ENCODE measurements at regions of chr10 and their contacts with region 1.

Region 1: GRCh38 chr10:59580026-59580863 is 129.4 kb downstream of the SLC16A9 start:
- DNase-seq: no peak

Region 2: DNA sequence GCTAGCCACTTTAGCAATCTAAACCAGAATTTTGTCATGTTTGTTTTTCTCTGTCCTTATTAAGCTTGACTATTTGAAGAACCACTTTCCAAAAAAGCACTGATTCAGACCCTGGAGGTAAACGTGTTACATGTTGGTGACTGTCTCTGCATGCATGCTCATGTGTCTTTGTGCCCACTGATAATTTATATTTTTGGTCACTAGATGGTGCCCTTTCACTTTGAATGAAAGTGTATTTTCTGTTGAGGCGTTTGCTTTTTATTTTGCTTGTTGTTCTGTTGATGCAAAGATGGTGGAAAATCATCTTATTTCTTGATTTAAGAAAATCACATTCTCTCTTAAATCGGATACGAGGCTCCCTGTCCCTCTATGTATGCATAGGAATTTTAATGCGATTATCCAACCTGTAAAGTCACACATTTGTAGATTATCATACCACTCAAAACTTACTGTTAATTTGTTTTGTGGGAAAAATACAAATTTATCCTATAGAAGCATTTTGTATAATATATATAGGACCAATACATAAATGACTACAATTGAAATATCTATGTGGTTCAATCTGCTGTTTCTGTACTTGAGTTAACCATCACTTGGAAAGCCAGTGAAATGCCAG is 798.3 kb before region 1 on chr10:
- intact Hi-C with region 1: loop called (anchors 10 kb)
- DNase-seq: no peak

Region 3: DNA sequence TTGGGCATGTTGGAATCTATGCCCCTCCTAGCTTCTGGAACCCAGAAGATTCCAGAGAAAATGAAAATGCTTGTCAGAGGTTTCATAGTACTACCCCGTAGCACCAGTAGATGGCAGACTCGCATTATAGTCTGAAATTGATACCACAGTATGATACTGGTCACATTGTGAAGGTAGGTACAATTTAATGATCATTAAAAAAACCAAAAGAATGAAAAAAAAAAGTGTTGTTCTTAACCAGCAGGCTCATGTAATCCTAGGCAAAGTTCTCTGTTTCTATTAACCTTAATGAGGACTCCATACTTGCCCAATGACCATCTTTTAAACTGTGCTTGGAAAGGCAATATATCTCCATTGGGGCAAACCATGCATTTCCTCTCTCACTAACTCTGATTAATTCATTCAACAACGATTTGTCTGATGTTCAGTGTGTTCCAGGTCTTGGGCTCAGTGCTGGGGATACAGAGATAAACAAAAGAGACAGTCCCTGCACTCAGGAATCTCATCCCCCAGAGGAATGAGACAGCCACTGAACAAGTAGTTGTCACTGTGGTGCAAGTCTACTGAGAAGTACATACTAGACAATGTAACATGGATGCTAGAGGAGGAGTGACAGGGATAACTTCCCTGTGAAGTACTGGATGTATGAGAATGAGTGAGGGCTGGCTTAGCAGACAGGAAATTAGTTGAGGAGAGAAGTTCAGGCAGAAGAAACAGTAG is 627.3 kb before region 1 on chr10:
- intact Hi-C with region 1: loop called (anchors 5 kb)
- DNase-seq: peak in 3 of 10 donors; percentile 45 to 61 (median 46)

Region 4: DNA sequence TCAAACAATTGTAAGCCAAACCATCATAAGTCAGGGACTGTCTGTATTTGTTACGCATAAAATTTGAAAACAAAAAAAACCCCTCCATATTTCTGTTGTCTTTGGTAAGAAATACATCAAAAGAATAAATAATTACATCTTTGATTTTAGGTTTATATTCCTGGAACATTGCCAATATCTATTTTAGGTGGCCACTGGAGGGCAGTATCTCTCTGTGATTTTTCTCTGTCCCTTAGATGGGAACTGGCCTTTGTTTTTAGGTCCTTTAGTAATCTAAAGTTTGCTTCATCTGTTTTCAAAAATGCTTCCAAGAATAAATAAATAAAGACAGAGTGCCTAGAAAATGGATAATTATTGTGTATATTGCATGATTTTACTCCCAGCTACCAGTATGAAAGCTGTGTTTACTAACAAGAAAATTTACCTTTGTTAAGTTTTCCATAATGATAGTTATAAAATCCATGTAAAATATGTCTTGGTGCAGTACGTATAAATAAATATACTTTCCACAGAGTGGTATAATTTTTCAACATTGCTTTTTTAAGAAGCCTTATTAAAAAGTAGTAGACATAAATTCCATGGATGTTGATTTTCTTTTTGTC is 339.6 kb before region 1 on chr10:
- intact Hi-C with region 1: loop called (anchors 2 kb)
- DNase-seq: no peak

Region 5: DNA sequence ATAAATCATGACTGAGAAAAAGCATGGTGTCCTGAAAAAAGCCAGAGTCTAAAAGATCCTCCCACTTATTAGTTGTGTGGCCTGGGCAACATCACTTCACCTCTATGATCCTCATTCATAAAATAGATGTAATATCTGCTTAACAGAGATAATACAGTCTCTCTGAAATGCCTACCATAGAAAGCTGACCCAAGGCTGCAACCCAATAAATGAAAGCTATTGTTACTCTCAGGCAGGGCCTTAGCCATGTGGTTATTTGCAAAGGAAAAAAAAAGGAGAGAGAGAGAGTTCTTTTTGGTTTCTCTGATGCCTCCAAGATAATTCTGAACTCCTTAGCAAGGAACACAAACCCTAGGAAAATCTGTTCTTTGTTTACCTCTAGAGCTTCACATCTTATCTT is 225.8 kb before region 1 on chr10:
- intact Hi-C with region 1: loop called (anchors 10 kb)
- DNase-seq: no peak

Region 6: GRCh38 chr10:59465088-59465487 is 115.2 kb before region 1 on chr10:
- intact Hi-C with region 1: loop called (anchors 10 kb)
- DNase-seq: peak in 3 of 10 donors; percentile 11 to 40 (median 39)

Region 7: GRCh38 chr10:59553162-59553900 is 26.9 kb before region 1 on chr10:
- intact Hi-C with region 1: no loop called
- DNase-seq: peak in 1 of 10 donors; percentile 52

Region 8: DNA sequence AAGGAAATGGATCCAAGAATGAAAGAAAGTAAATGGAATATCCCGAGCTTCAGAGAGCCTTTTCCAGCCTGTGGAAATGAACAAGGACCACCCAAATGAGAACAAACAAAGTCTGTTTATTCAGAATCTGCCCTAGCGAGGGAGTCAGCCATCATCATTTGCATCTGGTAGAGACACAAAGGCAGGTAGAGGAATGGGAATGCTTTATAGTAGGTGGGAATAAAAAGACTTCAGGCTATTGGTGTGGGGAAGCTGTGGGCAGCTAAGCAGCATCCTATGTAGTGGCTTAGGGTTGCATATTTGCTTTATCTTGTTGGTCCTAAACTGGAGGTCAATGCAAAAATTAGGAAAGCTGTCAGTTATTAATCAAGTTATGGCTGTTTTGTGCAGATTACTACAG is 182.3 kb after region 1 on chr10:
- intact Hi-C with region 1: no loop called
- DNase-seq: no peak